Activated CD4-positive, alpha-beta T cell treated with anti-CD3 and anti-CD28 coated beads, Interleukin-2, amount 10 ng/mL, durations not matched to agents 24 days and 14 days (primary cell): ENCODE measurements at regions of chr4 and their contacts with region 1.

Region 1: DNA sequence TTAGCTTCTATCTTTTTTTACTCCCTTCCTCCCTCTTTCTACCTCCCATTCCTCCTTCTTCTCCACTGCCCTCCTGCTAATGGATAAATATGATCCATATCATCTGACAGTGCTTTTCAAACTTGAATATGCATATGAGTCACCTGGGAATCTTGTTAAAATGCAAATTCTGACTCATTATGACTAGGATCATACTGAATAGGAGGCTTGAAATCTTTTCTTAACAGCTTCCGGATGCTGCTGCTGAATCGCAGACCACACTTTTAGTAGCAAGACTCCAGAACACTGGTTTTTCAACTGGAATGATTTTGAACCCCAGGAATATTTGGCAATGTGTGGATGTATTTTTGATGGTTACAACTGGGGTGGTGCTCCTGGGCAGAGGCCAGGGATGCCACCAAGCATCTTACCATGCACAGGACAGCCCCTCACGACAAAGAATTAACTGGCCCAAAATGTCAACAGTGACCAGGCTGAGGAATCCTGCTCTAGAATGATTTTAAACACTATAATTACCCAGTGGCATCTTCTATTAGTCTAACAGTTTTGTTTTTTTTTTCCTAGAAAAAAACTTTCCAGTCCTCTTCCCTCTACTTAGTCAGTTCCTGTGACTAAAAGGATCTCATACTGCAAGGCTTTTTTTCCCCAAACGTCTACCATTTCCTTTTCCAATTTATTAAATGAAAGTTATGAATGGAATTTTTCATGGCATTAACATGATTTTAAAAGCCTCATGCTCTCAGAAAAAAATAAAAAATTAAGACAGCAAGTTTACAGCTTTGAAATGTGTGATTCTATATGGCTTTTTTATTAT is 10.6 kb upstream of the PYURF start:
- DNase-seq: no peak
- H3K4me3 Mint-ChIP-seq: no peak overlapping the region
- H3K27ac Mint-ChIP-seq: no peak overlapping the region
- H3K4me1 Mint-ChIP-seq: peaks cover 6% of the 10 kb centered on the region
- H3K27me3 Mint-ChIP-seq: no peaks in the 10 kb centered on the region

Region 2: GRCh38 chr4:88659055-88659889 is 125.1 kb after region 1 on chr4:
- intact Hi-C with region 1: loop called (anchors 1 kb)
- DNase-seq: peak; percentile 75
- H3K4me3 Mint-ChIP-seq: no peak overlapping the region
- H3K27ac Mint-ChIP-seq: no peak overlapping the region
- H3K4me1 Mint-ChIP-seq: peaks cover 10% of the 10 kb centered on the region
- H3K27me3 Mint-ChIP-seq: no peaks in the 10 kb centered on the region

Region 3: GRCh38 chr4:88672987-88673386 is 138.8 kb after region 1 on chr4:
- intact Hi-C with region 1: loop called (anchors 5 kb)
- DNase-seq: peak; percentile 67
- H3K4me3 Mint-ChIP-seq: no peak overlapping the region
- H3K27ac Mint-ChIP-seq: no peak overlapping the region
- H3K4me1 Mint-ChIP-seq: peaks cover 3% of the 10 kb centered on the region
- H3K27me3 Mint-ChIP-seq: no peaks in the 10 kb centered on the region

Region 4: GRCh38 chr4:89024051-89024675 is 490.0 kb after region 1 on chr4:
- intact Hi-C with region 1: loop called (anchors 2 kb)
- DNase-seq: peak; percentile 89
- H3K4me3 Mint-ChIP-seq: no peak overlapping the region
- H3K27ac Mint-ChIP-seq: no peak overlapping the region
- H3K4me1 Mint-ChIP-seq: peaks cover 2% of the 10 kb centered on the region
- H3K27me3 Mint-ChIP-seq: no peaks in the 10 kb centered on the region